Panc1 (cell line): ENCODE measurements at regions of chr1 and their contacts with region 1.

Region 1: DNA sequence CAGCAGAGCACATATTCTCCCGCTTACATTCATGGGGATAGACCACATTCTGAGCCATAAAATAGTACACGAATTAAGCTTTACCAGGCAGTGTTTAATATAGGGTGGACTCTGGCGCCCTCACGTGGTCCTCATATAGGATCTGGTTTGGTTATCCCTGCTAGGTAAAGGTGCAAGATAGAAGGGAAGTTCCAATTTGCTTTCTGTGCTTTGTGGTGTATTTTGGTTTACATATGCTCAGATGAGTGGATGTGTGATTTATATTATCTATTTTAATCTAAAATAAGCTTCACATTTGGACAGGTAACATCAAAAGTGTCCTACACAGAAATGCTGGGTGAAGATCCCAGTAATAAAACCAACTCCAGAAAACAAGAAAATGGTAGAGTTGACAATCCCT is 3.6 kb downstream of the CR1 start:
- DNase-seq: peak; percentile 57
- ATAC-seq: peak; percentile 91
- H3K4me3 ChIP-seq: no peak overlapping the region
- H3K27ac ChIP-seq: no peak overlapping the region
- H3K4me1 ChIP-seq: no peaks in the 10 kb centered on the region
- H3K27me3 ChIP-seq: peaks cover 28% of the 10 kb centered on the region
- CTCF ChIP-seq: peak; percentile 82

Region 2: GRCh38 chr1:207077470-207078377 is 421.8 kb before region 1 on chr1:
- CTCF ChIA-PET with region 1: no interaction called
- POLR2A ChIA-PET with region 1: no interaction called
- in situ Hi-C with region 1: no loop called
- intact Hi-C with region 1: loop called (anchors 1 kb)
- DNase-seq: peak; percentile 78
- ATAC-seq: peak; percentile 91
- H3K4me3 ChIP-seq: no peak overlapping the region
- H3K27ac ChIP-seq: no peak overlapping the region
- H3K4me1 ChIP-seq: no peaks in the 10 kb centered on the region
- H3K27me3 ChIP-seq: no peaks in the 10 kb centered on the region
- CTCF ChIP-seq: peak; percentile 95

Region 3: GRCh38 chr1:207084701-207085180 is 414.8 kb before region 1 on chr1:
- CTCF ChIA-PET with region 1: interaction called, 5 read pairs
- POLR2A ChIA-PET with region 1: no interaction called
- in situ Hi-C with region 1: no loop called
- intact Hi-C with region 1: loop called (anchors 1 kb)
- DNase-seq: peak; percentile 47
- ATAC-seq: peak; percentile 91
- H3K4me3 ChIP-seq: no peak overlapping the region
- H3K27ac ChIP-seq: no peak overlapping the region
- H3K4me1 ChIP-seq: 0 out of 2 replicates have a peak, but pooled peaks cover 2% of the 10 kb centered on the region
- H3K27me3 ChIP-seq: no peaks in the 10 kb centered on the region
- CTCF ChIP-seq: peak; percentile 76

Region 4: GRCh38 chr1:207404849-207405525 is 94.6 kb before region 1 on chr1:
- CTCF ChIA-PET with region 1: no interaction called
- POLR2A ChIA-PET with region 1: no interaction called
- in situ Hi-C with region 1: no loop called
- intact Hi-C with region 1: loop called (anchors 1 kb)
- DNase-seq: peak; percentile 42
- ATAC-seq: peak; percentile 91
- H3K4me3 ChIP-seq: no peak overlapping the region
- H3K27ac ChIP-seq: no peak overlapping the region
- H3K4me1 ChIP-seq: no peaks in the 10 kb centered on the region
- H3K27me3 ChIP-seq: no peaks in the 10 kb centered on the region; the same call in 1 of the 2 replicates
- CTCF ChIP-seq: peak; percentile 76

Region 5: GRCh38 chr1:207603777-207604176 is 104.2 kb after region 1 on chr1:
- CTCF ChIA-PET with region 1: no interaction called
- POLR2A ChIA-PET with region 1: no interaction called
- in situ Hi-C with region 1: no loop called
- intact Hi-C with region 1: no loop called
- DNase-seq: no peak
- ATAC-seq: no peak
- H3K4me3 ChIP-seq: no peak overlapping the region
- H3K27ac ChIP-seq: no peak overlapping the region
- H3K4me1 ChIP-seq: no peaks in the 10 kb centered on the region
- H3K27me3 ChIP-seq: peaks cover 9% of the 10 kb centered on the region
- CTCF ChIP-seq: no peak